Activated naive CD4-positive, alpha-beta T cell treated with anti-CD3 and anti-CD28 coated beads for 36 hours (primary cell): ENCODE measurements at regions of chr20 and their contacts with region 1.

Region 1: DNA sequence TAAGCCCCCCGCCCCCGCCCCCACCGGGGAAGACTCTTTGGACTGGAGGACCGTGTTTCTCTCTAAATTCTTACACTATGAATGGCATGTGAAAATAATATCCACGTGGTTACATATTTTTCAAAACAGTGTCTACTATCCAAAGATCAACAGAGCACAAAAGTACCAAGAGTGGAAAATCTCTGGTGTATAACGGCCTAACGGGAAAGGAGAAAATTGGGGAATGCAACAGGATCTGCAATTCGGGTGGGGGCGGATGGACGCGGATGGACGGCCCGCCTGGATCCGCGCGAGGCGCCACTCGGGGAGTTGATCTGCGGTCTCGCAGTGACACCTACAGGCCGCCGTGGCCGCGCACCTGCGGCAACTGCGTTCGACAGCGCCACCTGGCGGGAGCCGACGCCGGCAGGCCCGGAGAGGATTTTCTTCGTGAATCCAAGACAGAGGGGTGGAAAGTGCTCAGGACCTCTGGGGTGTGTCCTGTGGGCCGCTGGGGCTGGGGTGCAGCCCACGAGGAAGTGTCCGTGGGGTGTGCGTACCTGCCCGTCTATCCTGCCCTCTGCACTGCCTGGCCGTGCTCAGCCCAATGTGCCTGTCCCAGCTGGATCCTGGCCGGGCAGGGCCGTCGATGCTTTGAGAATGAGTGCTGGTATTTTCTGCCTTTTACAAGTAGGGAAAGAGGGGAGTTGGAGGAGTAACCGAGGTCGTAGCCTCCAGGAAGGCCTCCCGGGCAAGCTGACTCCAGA is 18.6 kb downstream of the ANKRD60 start:
- DNase-seq: peak; percentile 89
- H3K4me3 Mint-ChIP-seq: no peak overlapping the region
- H3K27ac Mint-ChIP-seq: no peak overlapping the region
- H3K4me1 Mint-ChIP-seq: peaks cover 2% of the 10 kb centered on the region
- H3K27me3 Mint-ChIP-seq: peaks cover 4% of the 10 kb centered on the region

Region 2: DNA sequence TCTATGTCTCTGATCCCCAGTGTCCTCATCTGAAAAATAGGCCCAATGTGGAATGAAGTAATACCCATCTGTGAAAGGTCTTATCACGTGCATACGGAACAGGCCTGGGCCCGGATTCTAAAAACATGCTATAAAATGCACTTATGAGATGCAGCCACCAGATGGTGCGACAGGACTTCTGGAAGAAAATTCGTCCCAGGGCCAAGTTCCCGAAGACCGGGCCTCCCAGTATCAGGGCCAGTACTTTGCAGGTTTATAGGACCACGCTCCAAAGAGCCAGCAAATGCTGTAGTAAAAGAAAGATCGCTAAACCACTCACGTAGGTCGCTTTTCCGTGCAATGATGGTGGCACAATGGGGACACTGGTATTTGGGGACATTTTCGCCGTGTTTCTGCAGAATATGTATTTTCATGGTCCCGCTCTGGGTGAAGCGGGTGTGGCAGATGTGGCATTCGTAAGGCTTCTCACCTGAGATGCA is 695.5 kb before region 1 on chr20:
- CTCF ChIA-PET with region 1: interaction called, 6 read pairs
- intact Hi-C with region 1: loop called (anchors 10 kb)
- DNase-seq: peak; percentile 58
- H3K4me3 Mint-ChIP-seq: no peak overlapping the region
- H3K27ac Mint-ChIP-seq: no peak overlapping the region
- H3K4me1 Mint-ChIP-seq: no peaks in the 10 kb centered on the region
- H3K27me3 Mint-ChIP-seq: peaks cover 13% of the 10 kb centered on the region

Region 3: DNA sequence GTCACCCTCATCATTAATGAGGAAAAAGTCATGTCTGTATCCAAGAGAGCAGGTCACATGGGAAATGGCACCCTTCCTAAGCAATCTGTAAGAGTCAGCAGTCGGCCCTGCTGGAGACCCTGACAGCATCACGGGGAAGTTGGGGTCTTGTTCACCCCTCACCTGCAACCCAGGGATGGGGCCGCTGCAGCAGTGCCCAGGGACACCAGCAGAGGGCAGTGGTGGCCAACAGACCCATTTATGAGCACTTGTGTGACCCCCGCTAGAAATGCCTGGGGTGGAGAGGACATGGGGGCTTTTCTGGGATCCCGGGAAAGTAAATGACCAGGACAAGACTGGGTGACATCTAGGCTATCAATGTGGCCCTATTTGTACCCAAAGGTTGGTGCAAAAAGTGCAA is 17.3 kb before region 1 on chr20:
- CTCF ChIA-PET with region 1: interaction called, 12 read pairs
- intact Hi-C with region 1: loop called (anchors 2 kb)
- DNase-seq: peak; percentile 43
- H3K4me3 Mint-ChIP-seq: no peak overlapping the region
- H3K27ac Mint-ChIP-seq: no peak overlapping the region
- H3K4me1 Mint-ChIP-seq: no peaks in the 10 kb centered on the region
- H3K27me3 Mint-ChIP-seq: peaks cover 3% of the 10 kb centered on the region